ENCODE measurements at regions of chr14 and their contacts with region 1.

Region 1: DNA sequence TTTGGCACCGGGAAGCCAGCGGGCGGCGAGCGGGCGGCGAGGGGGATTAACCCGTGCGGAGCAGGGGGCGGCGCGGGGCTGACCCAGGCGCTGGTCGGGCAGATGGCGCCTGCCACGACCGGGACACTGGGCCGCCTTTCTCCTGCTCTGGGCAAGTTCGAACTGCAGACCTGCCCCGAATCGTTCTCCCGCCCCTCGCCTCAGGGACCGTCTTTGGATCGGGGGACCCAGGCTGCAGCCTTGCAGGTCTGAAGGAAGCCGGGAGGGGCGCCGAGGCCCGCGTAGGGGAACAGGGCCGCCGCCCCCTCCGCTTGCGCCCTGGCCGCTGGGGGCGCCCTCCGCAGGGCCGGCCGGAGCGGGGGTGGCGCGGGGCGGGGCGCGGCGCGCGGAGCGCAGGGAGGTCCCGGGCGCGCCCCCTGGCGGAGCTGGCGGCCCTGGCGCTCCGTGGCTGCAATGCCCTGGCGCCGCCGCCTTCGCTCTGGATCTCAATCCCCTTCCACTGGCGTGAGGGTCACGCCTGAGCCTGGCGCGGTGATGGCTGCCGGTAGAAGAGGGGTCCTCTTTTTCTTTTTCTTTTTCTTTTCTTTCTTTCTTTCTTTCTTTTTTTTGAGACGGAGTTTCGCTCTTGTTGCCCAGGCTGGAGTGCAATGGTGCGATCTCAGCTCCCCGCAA is 449 bp upstream of the LTBP2 start:
- DNase-seq: peak; percentile 88
- ATAC-seq: peak; percentile 84
- H3K4me3 Mint-ChIP-seq: peak overlapping the region; percentile 76
- H3K27ac Mint-ChIP-seq: no peak overlapping the region
- H3K4me1 Mint-ChIP-seq: peaks cover 21% of the 10 kb centered on the region
- H3K27me3 Mint-ChIP-seq: peaks cover 68% of the 10 kb centered on the region
- CTCF ChIP-seq: peak; percentile 40

Region 2: DNA sequence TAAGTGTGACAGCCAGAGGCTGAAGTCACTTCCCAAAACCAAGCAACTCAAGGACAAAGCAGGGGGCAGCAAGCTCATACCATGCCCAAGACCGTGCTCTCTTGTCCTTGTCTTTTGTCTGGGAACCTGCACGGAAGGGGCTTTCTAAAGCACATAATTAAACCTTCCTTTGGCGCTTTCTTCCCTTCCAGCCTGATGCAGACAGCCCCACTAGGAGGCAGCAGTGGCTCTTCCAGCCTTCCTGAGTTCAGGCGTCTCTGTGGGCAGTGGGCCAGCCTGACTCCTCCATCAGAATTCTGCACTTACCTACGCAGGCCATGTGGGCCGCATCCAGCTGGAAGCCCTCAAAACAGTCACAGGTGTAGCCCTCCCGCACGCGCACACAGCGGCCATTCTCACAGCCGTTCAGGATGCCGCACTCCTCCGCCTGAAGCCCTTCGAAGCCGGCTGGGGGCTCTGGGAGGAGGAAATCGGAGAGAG is 111.3 kb before region 1 on chr14:
- CTCF ChIA-PET with region 1: interaction called, 58 read pairs
- POLR2A ChIA-PET with region 1: interaction called, 3 read pairs
- DNase-seq: peak; percentile 79
- ATAC-seq: peak; percentile 87
- H3K4me3 Mint-ChIP-seq: no peak overlapping the region
- H3K27ac Mint-ChIP-seq: peak overlapping the region; percentile 91
- H3K4me1 Mint-ChIP-seq: peaks cover 34% of the 10 kb centered on the region
- H3K27me3 Mint-ChIP-seq: no peaks in the 10 kb centered on the region
- CTCF ChIP-seq: 0 out of 2 replicates have a peak, but pooled peaks have one; percentile 29

Region 3: DNA sequence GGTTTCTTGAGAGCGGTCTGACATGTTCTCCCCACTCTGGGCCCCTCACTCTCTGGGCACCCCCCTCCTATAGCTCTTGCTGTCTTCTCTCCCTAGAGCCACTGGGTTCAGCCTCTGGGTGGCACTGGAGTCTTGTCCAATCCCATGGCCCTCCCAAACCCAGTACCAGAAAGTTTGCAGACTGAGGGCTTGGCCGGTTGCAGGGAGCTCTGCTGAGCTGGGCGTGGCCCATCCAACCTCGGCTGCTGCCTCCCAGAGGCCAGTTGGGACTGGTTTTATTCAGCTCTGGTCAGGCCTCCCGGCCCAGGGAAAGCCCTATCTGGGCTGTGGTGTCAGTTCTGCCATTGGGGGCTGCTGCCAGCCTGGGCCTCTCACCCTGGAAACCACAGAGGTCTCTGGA is 81.0 kb before region 1 on chr14:
- CTCF ChIA-PET with region 1: interaction called, 24 read pairs
- POLR2A ChIA-PET with region 1: interaction called, 3 read pairs
- DNase-seq: peak; percentile 77
- ATAC-seq: peak; percentile 92
- H3K4me3 Mint-ChIP-seq: no peak overlapping the region
- H3K27ac Mint-ChIP-seq: 0 out of 2 replicates have a peak overlapping the region, but pooled peaks have one; percentile 63
- H3K4me1 Mint-ChIP-seq: peaks cover 7% of the 10 kb centered on the region
- H3K27me3 Mint-ChIP-seq: no peaks in the 10 kb centered on the region
- CTCF ChIP-seq: no peak

Region 4: GRCh38 chr14:74599321-74599761 is 13.1 kb before region 1 on chr14:
- CTCF ChIA-PET with region 1: interaction called, 19 read pairs
- POLR2A ChIA-PET with region 1: interaction called, 4 read pairs
- DNase-seq: no peak
- ATAC-seq: no peak
- H3K4me3 Mint-ChIP-seq: no peak overlapping the region
- H3K27ac Mint-ChIP-seq: no peak overlapping the region
- H3K4me1 Mint-ChIP-seq: no peaks in the 10 kb centered on the region
- H3K27me3 Mint-ChIP-seq: no peaks in the 10 kb centered on the region
- CTCF ChIP-seq: no peak

Region 5: DNA sequence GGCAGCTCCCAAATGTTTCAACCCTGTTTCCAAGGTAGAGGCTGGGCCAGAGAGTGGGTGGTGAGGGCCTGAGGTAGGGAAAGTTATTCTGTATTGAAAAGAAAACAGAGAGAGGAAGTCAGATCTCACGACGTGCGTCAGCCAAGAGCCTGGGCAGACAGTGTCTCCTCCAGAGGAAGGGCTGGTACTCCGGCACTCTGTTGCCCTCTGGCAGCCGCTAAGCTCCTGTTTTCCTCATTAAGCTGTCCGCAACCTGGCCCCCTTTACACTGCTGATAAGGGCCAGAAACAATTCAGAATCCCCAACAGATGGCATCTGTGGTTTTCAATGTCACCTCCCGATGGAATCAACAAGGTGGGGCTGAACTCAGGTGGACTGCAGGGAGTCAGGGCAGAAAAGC is 25.6 kb after region 1 on chr14:
- CTCF ChIA-PET with region 1: interaction called, 32 read pairs
- POLR2A ChIA-PET with region 1: no interaction called
- DNase-seq: no peak
- ATAC-seq: peak; percentile 57
- H3K4me3 Mint-ChIP-seq: no peak overlapping the region
- H3K27ac Mint-ChIP-seq: no peak overlapping the region
- H3K4me1 Mint-ChIP-seq: peaks cover 7% of the 10 kb centered on the region
- H3K27me3 Mint-ChIP-seq: no peaks in the 10 kb centered on the region
- CTCF ChIP-seq: no peak

Region 6: GRCh38 chr14:74793506-74794168 is 181.2 kb after region 1 on chr14:
- CTCF ChIA-PET with region 1: interaction called, 10 read pairs
- POLR2A ChIA-PET with region 1: no interaction called
- DNase-seq: no peak
- ATAC-seq: peak; percentile 35; the same call in 1 of the 2 replicates
- H3K4me3 Mint-ChIP-seq: 0 out of 2 replicates have a peak overlapping the region, but pooled peaks have one; percentile 0
- H3K27ac Mint-ChIP-seq: peak overlapping the region; percentile 46; the same call in 1 of the 2 replicates
- H3K4me1 Mint-ChIP-seq: peaks cover 40% of the 10 kb centered on the region
- H3K27me3 Mint-ChIP-seq: no peaks in the 10 kb centered on the region
- CTCF ChIP-seq: no peak